ENCODE measurements at regions of chr17 and their contacts with region 1.

Region 1: GRCh38 chr17:50478391-50479381 is at the start of gene RSAD1:
- DNase-seq: peak; percentile 98 to 99
- H3K4me3 ChIP-seq: peak within 1 kb of the TSS; percentile 70
- H3K4me3 Mint-ChIP-seq: peak within 1 kb of the TSS; percentile 78
- H3K27ac Mint-ChIP-seq: peak within 1 kb of the TSS; percentile 90
- H3K4me1 ChIP-seq: peaks cover 22% of the 10 kb centered on the region
- H3K4me1 Mint-ChIP-seq: peaks cover 50% of the 10 kb centered on the region
- H3K27me3 ChIP-seq: no peaks in the 10 kb centered on the region
- H3K27me3 Mint-ChIP-seq: no peaks in the 10 kb centered on the region
- CTCF ChIP-seq: peak; percentile 80 to 99
- total RNA-seq, gene RSAD1: 85.3 and 93.9 TPM in 2 replicates

Region 2: GRCh38 chr17:50200457-50201275 is 278.0 kb before region 1 on chr17:
- CTCF ChIA-PET with region 1: interaction called, 10 read pairs
- POLR2A ChIA-PET with region 1: no interaction called
- intact Hi-C with region 1: loop called (anchors 1 kb)
- DNase-seq: peak; percentile 96 to 98
- H3K4me3 ChIP-seq: peak overlapping the region; percentile 42
- H3K4me3 Mint-ChIP-seq: peak overlapping the region; percentile 73
- H3K27ac Mint-ChIP-seq: peak overlapping the region; percentile 7
- H3K4me1 ChIP-seq: peaks cover 23% of the 10 kb centered on the region
- H3K4me1 Mint-ChIP-seq: peaks cover 20% of the 10 kb centered on the region
- H3K27me3 ChIP-seq: 0 out of 2 replicates have a peak, but pooled peaks cover 1% of the 10 kb centered on the region
- H3K27me3 Mint-ChIP-seq: no peaks in the 10 kb centered on the region
- CTCF ChIP-seq: peak; percentile 99 to 100

Region 3: DNA sequence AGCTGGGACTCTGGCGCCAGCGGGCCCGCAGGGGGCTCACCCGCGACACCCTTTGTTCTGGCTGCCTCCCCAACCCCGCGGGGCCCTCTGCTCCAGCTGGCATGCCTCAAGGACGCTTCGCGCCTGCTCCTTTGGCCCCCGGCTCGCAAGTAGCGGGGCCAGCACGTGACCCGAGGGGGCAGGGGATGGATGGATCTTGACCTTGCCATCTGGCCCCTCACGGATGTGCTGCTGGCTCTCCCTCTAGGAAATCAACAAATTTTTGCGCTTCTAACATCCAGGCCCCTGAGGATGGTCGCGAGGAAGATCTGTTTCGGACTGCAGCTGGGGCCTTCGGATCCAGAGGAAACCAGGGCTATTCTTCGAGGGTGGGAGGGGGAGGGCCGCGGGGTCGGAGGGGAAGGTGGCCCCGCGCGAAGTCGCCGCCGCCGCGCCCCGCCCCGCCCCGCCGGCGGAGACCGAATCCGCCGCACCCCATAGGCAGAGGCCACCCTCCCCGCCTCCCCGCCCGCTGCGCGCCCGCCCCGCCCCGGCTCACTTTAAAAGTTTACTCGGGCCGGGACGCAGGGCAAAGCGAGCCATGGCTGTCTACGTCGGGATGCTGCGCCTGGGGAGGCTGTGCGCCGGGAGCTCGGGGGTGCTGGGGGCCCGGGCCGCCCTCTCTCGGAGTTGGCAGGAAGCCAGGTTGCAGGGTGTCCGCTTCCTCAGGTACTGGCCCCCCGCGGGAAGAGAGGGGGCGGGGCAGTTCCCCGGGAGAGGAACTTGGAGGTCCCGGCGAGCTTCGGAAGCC is 52.8 kb before region 1 on chr17 and contains the start of gene ACSF2:
- CTCF ChIA-PET with region 1: interaction called, 13 read pairs
- POLR2A ChIA-PET with region 1: no interaction called
- intact Hi-C with region 1: loop called (anchors 1 kb)
- DNase-seq: peak; percentile 92 to 93
- H3K4me3 ChIP-seq: peak within 1 kb of the TSS; percentile 74
- H3K4me3 Mint-ChIP-seq: peak within 1 kb of the TSS; percentile 80
- H3K27ac Mint-ChIP-seq: peak within 1 kb of the TSS; percentile 54
- H3K4me1 ChIP-seq: peaks cover 64% of the 10 kb centered on the region
- H3K4me1 Mint-ChIP-seq: peaks cover 60% of the 10 kb centered on the region
- H3K27me3 ChIP-seq: no peaks in the 10 kb centered on the region
- H3K27me3 Mint-ChIP-seq: no peaks in the 10 kb centered on the region
- CTCF ChIP-seq: peak in 1 of 2 experiments; percentile 35
- total RNA-seq, gene ACSF2: 135 and 161 TPM in 2 replicates

Region 4: DNA sequence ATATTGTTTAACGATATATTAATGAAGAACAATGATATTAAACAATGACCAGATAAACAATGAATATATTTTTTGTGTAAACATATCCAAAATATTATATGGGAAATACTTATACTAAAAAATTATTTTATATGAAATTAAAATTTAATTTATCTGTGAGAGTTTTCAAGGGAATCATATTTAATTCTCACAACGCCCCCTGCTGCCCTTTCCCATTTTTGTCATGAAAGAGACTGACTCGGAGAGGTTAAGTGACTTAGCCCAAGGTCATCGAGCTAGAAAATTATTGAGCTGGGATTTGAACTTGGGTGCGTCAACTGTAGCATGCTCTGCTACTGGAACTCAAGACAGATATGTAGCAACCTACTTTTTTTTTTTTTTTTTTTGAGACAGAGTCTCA is 22.4 kb after region 1 on chr17:
- CTCF ChIA-PET with region 1: interaction called, 22 read pairs
- POLR2A ChIA-PET with region 1: interaction called, 4 read pairs
- intact Hi-C with region 1: loop called (anchors 1 kb)
- DNase-seq: peak in 1 of 2 experiments; percentile 71
- H3K4me3 ChIP-seq: no peak overlapping the region
- H3K4me3 Mint-ChIP-seq: no peak overlapping the region
- H3K27ac Mint-ChIP-seq: no peak overlapping the region
- H3K4me1 ChIP-seq: peaks cover 19% of the 10 kb centered on the region
- H3K4me1 Mint-ChIP-seq: peaks cover 15% of the 10 kb centered on the region
- H3K27me3 ChIP-seq: no peaks in the 10 kb centered on the region
- H3K27me3 Mint-ChIP-seq: no peaks in the 10 kb centered on the region
- CTCF ChIP-seq: peak; percentile 75 to 81

Region 5: GRCh38 chr17:50547035-50547735 is 68.5 kb after region 1 on chr17 and contains the start of gene SPATA20:
- CTCF ChIA-PET with region 1: interaction called, 27 read pairs
- POLR2A ChIA-PET with region 1: interaction called, 11 read pairs
- intact Hi-C with region 1: loop called (anchors 1 kb)
- DNase-seq: peak; percentile 99
- H3K4me3 ChIP-seq: peak within 1 kb of the TSS; percentile 57
- H3K4me3 Mint-ChIP-seq: peak within 1 kb of the TSS; percentile 80
- H3K27ac Mint-ChIP-seq: peak within 1 kb of the TSS; percentile 72
- H3K4me1 ChIP-seq: peaks cover 38% of the 10 kb centered on the region
- H3K4me1 Mint-ChIP-seq: peaks cover 43% of the 10 kb centered on the region
- H3K27me3 ChIP-seq: no peaks in the 10 kb centered on the region
- H3K27me3 Mint-ChIP-seq: no peaks in the 10 kb centered on the region
- CTCF ChIP-seq: peak; percentile 100
- total RNA-seq, gene SPATA20: 149 and 176 TPM in 2 replicates

Region 6: GRCh38 chr17:50707289-50708049 is 228.8 kb after region 1 on chr17 and contains the start of gene ANKRD40:
- CTCF ChIA-PET with region 1: interaction called, 4 read pairs
- POLR2A ChIA-PET with region 1: interaction called, 4 read pairs
- intact Hi-C with region 1: loop called (anchors 5 kb)
- DNase-seq: peak; percentile 95 to 99
- H3K4me3 ChIP-seq: peak within 1 kb of the TSS; percentile 68
- H3K4me3 Mint-ChIP-seq: peak within 1 kb of the TSS; percentile 97
- H3K27ac Mint-ChIP-seq: peak within 1 kb of the TSS; percentile 79
- H3K4me1 ChIP-seq: peaks cover 15% of the 10 kb centered on the region
- H3K4me1 Mint-ChIP-seq: peaks cover 31% of the 10 kb centered on the region
- H3K27me3 ChIP-seq: no peaks in the 10 kb centered on the region
- H3K27me3 Mint-ChIP-seq: no peaks in the 10 kb centered on the region
- CTCF ChIP-seq: no peak
- total RNA-seq, gene ANKRD40: 113 and 114 TPM in 2 replicates

Measured in Caco-2 (cell line).